Right cardiac atrium (tissue), 5 donors: ENCODE measurements at regions of chrX and their contacts with region 1.

Region 1: GRCh38 chrX:71139046-71139756 is 5.4 kb upstream of the NLGN3 start:
- DNase-seq: no peak
- ATAC-seq: no peak
- H3K4me3 ChIP-seq: no peak overlapping the region
- H3K27ac ChIP-seq: no peak overlapping the region
- H3K4me1 ChIP-seq: no peaks in the 10 kb centered on the region
- H3K27me3 ChIP-seq: no peaks in the 10 kb centered on the region

Region 2: DNA sequence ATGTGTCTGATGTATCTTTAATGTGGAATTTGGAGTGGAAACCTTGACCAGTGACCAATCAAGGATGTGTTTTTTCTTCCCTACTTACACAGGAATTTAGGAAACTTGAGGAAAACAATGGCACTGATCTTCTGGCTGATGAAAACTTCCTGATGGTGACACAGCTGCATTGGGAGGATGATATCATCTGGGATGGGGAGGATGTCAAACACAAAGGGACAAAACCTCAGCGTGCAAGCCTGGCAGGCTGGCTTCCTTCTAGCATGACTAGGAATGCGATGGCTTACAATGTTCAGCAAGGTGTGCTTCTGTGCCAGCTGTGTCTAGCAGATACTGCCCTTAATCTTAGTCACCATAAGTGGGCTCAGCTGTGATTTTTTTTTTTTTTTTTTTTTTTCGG is 239.5 kb after region 1 on chrX:
- intact Hi-C with region 1: loop called in 1 of 4 experiments (anchors 10 kb)
- DNase-seq: no peak
- ATAC-seq: peak in 1 of 2 donors; percentile 48
- H3K4me3 ChIP-seq: no peak overlapping the region
- H3K27ac ChIP-seq: no peak overlapping the region
- H3K4me1 ChIP-seq: no peaks in the 10 kb centered on the region
- H3K27me3 ChIP-seq: no peaks in the 10 kb centered on the region